ENCODE measurements at regions of chr20 and their contacts with region 1.

Region 1: DNA sequence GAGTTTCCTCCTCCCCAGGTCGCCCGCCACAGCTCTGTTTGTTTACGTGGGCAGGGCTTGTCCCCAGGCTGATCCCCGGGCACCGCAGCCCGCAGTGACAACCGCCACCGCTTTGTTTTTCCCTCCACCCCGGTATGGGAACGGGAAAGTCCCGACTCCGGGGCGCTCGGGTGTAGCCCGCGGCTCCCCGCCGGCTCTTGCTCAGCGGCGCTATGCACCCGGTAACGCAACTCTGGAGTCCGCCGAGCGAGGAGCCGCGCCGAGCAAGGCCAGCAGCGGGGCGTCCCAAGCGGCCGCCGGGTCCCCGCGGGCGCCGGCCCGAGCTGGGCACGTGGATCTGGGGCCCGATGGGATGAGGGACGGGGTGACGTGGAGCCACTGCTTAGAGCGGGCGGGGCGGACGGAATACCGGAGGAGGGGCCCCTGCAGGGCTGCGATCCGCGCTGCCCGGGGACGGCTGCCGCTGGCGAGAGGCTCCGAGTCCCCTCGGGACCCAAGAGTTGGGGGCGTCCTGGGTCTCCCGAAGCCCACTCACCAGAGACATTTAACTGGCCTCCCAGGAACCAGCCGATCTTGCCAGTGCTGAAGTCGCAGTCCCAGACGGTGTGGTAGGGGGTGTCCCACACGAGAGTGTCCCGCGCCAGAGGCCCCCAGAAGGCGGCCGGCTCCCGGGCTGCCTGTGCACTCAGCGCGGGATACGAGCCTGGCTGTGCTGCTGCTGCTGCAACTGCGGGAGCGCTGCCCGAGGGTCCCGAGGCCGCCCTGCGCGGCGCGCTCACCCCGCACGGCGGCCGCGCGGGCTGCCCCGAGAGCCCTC is 497 bp downstream of the ACSS1 start:
- DNase-seq: peak in 1 of 2 donors; percentile 85
- H3K4me3 ChIP-seq: peak overlapping the region; percentile 90 to 91
- H3K27ac ChIP-seq: peak overlapping the region; percentile 92 to 96
- H3K4me1 ChIP-seq: peaks cover 35 to 47% of the 10 kb centered on the region in 2 donors
- H3K27me3 ChIP-seq: no peaks in the 10 kb centered on the region
- CTCF ChIP-seq: no peak

Region 2: DNA sequence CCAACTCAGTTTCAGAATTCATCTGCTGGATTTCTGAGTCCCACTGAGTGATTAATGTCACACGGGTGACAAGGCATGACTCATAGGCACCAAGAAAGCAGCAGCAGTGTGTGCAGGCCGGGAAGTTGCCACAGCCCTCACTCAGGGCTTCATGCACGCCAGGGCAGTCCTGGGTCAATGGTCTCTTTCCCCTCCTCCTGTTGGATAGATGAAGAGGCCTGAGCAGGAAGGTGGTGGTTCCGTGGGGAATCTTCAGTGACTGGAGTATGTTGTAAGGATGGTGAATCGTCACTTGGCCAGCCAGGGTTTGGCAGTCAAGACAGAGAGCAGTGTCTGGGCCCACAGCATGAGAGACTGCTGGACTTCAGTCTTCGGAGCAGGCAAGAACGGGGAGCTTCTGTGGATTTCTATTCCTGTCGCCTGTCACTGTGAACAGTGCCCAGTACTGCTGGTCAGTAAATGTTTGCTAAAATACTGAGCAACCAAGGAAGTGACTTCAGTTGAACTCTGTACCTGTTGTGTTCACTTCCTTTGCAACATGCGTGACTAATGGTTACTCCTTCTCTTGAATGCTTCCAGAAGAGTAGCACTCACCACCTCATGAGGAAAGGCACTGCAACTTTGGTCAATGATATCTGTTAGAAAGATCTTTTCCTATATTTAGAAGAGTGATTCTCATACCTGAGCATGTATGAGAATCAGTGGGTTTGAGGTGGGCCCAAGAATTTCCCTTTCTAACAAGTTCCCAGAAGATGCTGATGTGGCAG is 1909.3 kb before region 1 on chr20:
- intact Hi-C with region 1: loop called (anchors 10 kb)
- DNase-seq: peak; percentile 79 to 95
- H3K4me3 ChIP-seq: no peak overlapping the region
- H3K27ac ChIP-seq: peak overlapping the region; percentile 93 to 96
- H3K4me1 ChIP-seq: peaks cover 30 to 87% of the 10 kb centered on the region in 2 donors
- H3K27me3 ChIP-seq: no peaks in the 10 kb centered on the region
- CTCF ChIP-seq: no peak

Region 3: DNA sequence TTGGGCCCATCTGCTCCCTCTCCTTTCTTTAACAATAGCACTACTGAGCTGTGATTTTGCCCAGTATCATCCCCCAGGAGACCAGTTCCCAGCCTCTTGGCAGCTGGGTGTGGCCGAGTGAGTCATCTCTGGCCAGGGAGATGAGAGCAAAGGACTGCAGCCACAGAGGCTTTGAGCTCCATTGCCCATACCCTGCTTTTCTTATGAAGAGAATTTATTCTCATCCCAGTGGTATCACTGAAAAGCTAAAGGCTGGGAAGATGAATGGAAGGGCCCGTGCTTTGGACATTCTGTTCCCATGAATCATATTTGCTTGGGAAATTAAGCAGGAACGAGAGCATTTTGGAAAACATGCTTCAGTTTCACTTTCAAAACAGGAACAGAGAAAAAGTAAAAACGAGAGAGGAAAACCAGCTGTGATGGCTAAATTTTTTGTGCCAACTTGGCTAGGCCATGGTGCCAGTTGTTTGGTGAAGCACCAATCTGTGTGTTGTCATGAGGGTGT is 1434.6 kb before region 1 on chr20:
- intact Hi-C with region 1: loop called (anchors 10 kb)
- DNase-seq: peak; percentile 50 to 88
- H3K4me3 ChIP-seq: peak overlapping the region; percentile 34 to 55
- H3K27ac ChIP-seq: peak overlapping the region; percentile 88 to 91
- H3K4me1 ChIP-seq: peaks cover 0 to 17% of the 10 kb centered on the region in 2 donors
- H3K27me3 ChIP-seq: no peaks in the 10 kb centered on the region
- CTCF ChIP-seq: no peak

Region 4: DNA sequence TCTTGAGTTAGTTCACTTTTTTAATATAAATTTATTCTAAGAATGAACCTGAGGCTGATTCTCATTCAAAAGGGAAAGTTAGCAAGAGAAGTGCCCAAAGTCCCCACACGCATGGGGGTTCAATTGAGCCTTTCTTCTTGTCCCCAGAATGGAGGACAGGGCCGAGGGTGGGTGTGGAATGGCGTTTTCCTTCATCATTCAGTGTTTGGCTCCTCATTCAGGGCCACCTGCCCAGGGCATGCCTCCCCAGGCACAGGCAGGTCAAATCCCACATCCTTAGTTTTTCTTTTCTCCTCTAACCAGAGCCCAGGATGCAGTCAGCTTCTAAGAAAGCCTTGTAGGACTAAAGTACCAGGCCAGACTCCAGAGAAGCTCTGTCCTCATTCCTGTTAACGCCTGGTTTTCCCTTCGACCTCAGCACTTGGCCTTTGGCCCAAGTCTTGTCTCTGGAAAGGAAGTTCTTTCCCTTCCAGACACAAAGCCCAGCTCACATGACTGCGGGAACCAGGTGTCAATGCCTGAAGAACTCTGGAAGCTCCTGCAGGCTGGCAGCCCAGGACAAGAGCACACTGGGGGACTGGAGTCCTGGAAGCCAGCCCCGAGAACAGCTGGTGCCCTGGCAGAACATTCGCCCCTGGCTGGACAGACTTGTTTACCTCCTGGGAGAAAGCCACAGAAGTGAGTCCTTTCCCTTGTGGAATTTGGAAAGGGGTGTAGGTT is 17.9 kb before region 1 on chr20:
- intact Hi-C with region 1: loop called (anchors 1 kb)
- DNase-seq: peak; percentile 82 to 94
- H3K4me3 ChIP-seq: peak overlapping the region in 1 of 2 donors; percentile 18
- H3K27ac ChIP-seq: peak overlapping the region; percentile 88 to 96
- H3K4me1 ChIP-seq: peaks cover 66 to 90% of the 10 kb centered on the region in 2 donors
- H3K27me3 ChIP-seq: no peaks in the 10 kb centered on the region
- CTCF ChIP-seq: no peak

Region 5: DNA sequence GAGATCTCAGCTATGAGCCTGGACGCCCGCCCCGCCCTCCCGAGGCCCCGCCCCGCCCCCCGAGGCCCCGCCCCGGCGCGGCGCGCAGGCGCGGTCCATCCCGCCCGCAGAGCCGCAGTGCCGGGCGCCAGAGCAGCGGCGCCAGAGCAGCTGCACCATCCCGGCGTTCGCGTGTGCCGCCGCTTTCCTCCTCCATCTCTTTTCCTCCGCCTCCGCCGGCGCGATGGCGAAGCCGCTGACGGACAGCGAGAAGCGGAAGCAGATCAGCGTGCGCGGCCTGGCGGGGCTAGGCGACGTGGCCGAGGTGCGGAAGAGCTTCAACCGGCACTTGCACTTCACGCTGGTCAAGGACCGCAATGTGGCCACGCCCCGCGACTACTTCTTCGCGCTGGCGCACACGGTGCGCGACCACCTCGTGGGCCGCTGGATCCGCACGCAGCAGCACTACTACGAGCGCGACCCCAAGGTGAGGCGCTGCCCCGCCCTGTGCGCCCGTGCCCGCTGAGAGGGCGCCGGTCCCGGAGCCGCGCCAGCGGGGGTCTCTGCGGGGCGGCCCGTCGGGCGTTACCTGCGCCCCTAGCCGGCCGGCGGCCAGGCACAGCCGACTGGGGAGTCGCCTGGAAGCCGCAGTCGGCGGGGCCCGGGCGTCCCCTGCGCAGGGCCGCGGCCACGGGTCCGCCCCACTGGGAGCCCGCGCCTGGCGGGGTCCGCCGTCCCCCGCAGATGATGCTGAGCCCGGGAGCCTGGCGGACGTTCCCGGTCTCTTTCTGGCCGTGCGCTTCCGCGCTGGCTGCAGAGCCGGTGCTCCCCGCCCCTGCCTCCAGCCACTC is 190.7 kb after region 1 on chr20 and contains the start of gene PYGB:
- intact Hi-C with region 1: loop called (anchors 5 kb)
- DNase-seq: peak in 1 of 2 donors; percentile 85
- H3K4me3 ChIP-seq: peak within 1 kb of the TSS; percentile 77 to 98
- H3K27ac ChIP-seq: peak within 1 kb of the TSS; percentile 94 to 98
- H3K4me1 ChIP-seq: peaks cover 12 to 38% of the 10 kb centered on the region in 2 donors
- H3K27me3 ChIP-seq: no peaks in the 10 kb centered on the region
- CTCF ChIP-seq: no peak
- total RNA-seq, gene PYGB: 125 TPM

Region 6: DNA sequence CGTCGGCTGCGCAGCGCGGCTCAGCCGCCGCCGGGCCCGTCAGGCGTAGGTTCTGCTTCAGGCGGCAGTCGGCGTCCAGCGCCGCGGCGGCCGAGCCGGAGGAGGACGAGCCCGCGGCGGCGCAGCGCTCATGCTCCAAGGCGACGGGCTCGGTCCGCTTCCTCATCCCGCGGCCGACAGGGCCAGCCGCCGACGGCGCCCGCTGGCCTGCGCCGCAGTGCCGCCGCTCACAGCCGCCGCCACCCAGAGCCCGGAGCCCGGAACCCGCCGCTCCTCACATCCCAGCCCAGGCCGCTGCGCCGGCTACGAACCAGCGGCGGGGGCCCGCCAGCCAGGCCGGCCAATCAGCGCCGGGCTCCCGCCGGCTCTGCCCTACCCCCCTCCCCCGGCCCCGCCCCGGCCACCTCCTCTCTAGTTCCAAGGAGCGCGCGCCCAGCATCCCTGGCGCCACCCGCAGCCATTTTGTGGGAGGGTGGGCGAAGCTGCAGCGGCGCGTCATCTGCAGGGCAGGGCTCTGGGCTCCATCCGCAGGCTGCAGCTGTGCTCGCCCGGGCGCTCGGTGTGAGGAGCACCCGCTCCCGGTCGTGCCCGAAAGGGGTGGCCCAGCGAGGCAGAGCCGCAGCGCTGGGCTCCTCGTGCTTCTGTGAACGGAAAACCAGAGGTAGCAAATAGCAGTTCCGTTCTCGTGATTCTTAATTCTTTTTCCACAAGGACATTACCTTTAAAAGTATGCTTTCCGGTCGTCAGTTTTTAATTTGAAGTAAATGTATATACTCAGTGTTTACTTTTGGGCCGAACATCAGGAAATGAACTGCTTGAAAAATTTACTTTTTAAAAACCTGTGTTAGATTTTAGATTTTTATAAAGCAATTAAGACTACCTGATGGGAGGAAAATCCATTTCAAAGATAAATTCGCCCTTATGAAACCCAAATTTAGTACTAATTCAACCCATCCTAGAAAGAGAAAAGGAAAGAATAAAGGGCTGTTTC is 333.4 kb after region 1 on chr20 and contains the start of gene ABHD12:
- intact Hi-C with region 1: loop called (anchors 5 kb)
- DNase-seq: peak; percentile 91 to 99
- H3K4me3 ChIP-seq: peak within 1 kb of the TSS; percentile 83 to 99
- H3K27ac ChIP-seq: peak within 1 kb of the TSS; percentile 70 to 91
- H3K4me1 ChIP-seq: peaks cover 0 to 3% of the 10 kb centered on the region in 2 donors
- H3K27me3 ChIP-seq: no peaks in the 10 kb centered on the region
- CTCF ChIP-seq: no peak
- total RNA-seq, gene ABHD12: 24.3 TPM

Region 7: DNA sequence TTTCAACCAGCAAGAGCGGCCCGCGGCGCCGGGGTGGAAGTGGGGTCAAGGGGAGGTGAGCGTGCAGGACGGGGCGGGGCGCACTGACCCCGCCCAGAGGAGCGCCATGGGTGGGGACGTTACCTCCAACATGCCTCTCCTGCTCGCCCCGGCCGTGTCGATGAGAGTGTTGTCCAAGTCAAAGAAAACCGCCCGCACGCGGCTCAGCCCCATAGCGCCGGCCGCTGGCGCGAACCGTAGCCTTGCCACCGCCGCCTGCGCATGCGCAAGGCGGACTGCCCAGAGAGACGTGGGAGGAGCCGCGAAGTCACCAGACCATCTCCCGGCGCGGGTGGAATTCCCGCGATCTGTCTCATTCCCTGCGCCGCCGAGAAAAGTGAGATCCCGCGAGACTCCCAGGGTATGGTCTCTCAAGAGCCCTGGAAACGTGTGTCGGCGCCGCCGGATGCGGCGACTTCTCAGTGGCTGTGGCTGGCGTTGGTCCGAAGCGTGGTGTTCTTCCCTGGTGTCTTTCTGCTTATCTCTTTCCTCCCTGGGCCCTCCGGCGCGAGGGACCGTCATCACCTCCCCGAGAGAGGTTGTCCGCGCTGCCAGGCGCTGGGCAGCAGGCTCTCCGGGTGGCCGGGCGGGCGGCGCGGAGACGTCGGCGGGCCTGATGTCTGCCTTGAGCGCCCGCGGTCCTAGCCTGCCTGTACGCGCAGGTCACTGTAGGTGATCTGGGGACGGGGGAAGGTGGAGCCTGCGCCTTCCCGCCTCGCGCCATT is 566.5 kb after region 1 on chr20 and contains the start of gene NANP:
- intact Hi-C with region 1: loop called (anchors 10 kb)
- DNase-seq: peak; percentile 95 to 99
- H3K4me3 ChIP-seq: peak within 1 kb of the TSS; percentile 88 to 95
- H3K27ac ChIP-seq: peak within 1 kb of the TSS; percentile 90 to 94
- H3K4me1 ChIP-seq: peaks cover 0 to 6% of the 10 kb centered on the region in 2 donors
- H3K27me3 ChIP-seq: no peaks in the 10 kb centered on the region
- CTCF ChIP-seq: no peak
- total RNA-seq, gene NANP: 2.6 TPM